ENCODE measurements at regions of chr7 and their contacts with region 1.

Region 1: GRCh38 chr7:128739048-128739962 is at the start of gene CALU:
- DNase-seq: peak; percentile 87 to 95 (median 94)
- ATAC-seq: peak; percentile 98
- H3K4me3 ChIP-seq: peak within 1 kb of the TSS; percentile 86
- H3K4me3 Mint-ChIP-seq: peak within 1 kb of the TSS; percentile 89 to 100 (median 97)
- H3K27ac ChIP-seq: peak within 1 kb of the TSS; percentile 85
- H3K27ac Mint-ChIP-seq: peak within 1 kb of the TSS; percentile 96 to 99 (median 98)
- H3K4me1 ChIP-seq: peaks cover 13% of the 10 kb centered on the region in 2 donors
- H3K4me1 Mint-ChIP-seq: peaks cover 11 to 52% (median 45%) of the 10 kb centered on the region in 7 donors
- H3K27me3 ChIP-seq: no peaks in the 10 kb centered on the region
- H3K27me3 Mint-ChIP-seq: peaks cover 0 to 5% (median 0%) of the 10 kb centered on the region in 5 donors
- total RNA-seq, gene CALU: 18.6 to 36.2 (median 22.6) TPM

Region 2: GRCh38 chr7:128409596-128410160 is 329.6 kb before region 1 on chr7 and contains the start of gene IMPDH1:
- CTCF ChIA-PET with region 1: no interaction called
- POLR2A ChIA-PET with region 1: no interaction called
- intact Hi-C with region 1: loop called in 1 of 2 experiments (anchors 1 kb)
- DNase-seq: peak; percentile 73 to 95 (median 83)
- ATAC-seq: peak; percentile 87
- H3K4me3 ChIP-seq: peak within 1 kb of the TSS; percentile 89
- H3K4me3 Mint-ChIP-seq: peak within 1 kb of the TSS; percentile 88 to 95 (median 92)
- H3K27ac ChIP-seq: peak within 1 kb of the TSS; percentile 81
- H3K27ac Mint-ChIP-seq: peak within 1 kb of the TSS; percentile 87 to 93 (median 90)
- H3K4me1 ChIP-seq: peaks cover 15 to 27% of the 10 kb centered on the region in 2 donors
- H3K4me1 Mint-ChIP-seq: peaks cover 12 to 41% (median 38%) of the 10 kb centered on the region in 7 donors
- H3K27me3 ChIP-seq: no peaks in the 10 kb centered on the region
- H3K27me3 Mint-ChIP-seq: peaks cover 0 to 26% (median 0%) of the 10 kb centered on the region in 5 donors
- total RNA-seq, gene IMPDH1: 36.5 to 92.0 (median 44.4) TPM

Region 3: GRCh38 chr7:128530855-128531104 is 208.5 kb before region 1 on chr7:
- CTCF ChIA-PET with region 1: no interaction called
- POLR2A ChIA-PET with region 1: no interaction called
- intact Hi-C with region 1: loop called in 1 of 2 experiments (anchors 2 kb)
- DNase-seq: no peak
- ATAC-seq: no peak
- H3K4me3 ChIP-seq: peak overlapping the region; percentile 46
- H3K4me3 Mint-ChIP-seq: peak overlapping the region in 1 of 10 donors; percentile 16
- H3K27ac ChIP-seq: peak overlapping the region; percentile 95
- H3K27ac Mint-ChIP-seq: no peak overlapping the region
- H3K4me1 ChIP-seq: peaks cover 0 to 4% of the 10 kb centered on the region in 2 donors
- H3K4me1 Mint-ChIP-seq: peaks cover 23 to 42% (median 40%) of the 10 kb centered on the region in 7 donors
- H3K27me3 ChIP-seq: no peaks in the 10 kb centered on the region
- H3K27me3 Mint-ChIP-seq: no peaks in the 10 kb centered on the region

Region 4: DNA sequence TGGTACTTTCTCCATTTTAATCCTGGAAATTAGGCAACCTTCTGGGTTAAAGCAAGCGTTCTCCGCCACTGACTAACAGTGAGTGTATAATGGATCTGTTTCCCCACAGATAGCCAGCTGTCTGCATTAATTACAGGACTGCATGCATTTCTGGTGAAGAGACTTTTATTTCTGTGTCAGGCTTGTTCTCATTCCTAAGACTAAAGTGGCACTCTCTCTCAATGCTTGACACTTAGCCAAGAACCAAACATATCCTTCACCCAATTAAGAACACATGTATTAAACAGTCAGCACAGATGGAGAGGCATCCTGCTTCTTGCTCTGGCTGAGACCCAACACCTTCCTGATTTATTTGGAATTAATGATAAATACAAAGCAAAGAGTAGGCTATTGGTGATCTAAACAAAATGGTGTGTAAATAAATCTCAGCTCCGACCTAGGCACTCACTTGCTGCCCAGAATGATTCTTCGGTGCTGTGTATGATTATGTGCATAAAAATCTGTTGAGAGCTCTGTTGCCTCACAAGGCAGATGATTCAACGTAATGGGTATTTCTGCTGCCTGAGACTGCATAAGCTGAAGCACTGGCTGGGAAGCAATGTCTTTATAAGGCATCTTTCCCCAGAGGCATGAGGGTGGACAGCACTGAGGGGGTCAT is 16.6 kb after region 1 on chr7:
- CTCF ChIA-PET with region 1: no interaction called
- POLR2A ChIA-PET with region 1: interaction called, 10 read pairs
- intact Hi-C with region 1: no loop called
- DNase-seq: no peak
- ATAC-seq: no peak
- H3K4me3 ChIP-seq: no peak overlapping the region
- H3K4me3 Mint-ChIP-seq: no peak overlapping the region
- H3K27ac ChIP-seq: no peak overlapping the region
- H3K27ac Mint-ChIP-seq: peak overlapping the region in 1 of 9 donors; percentile 36
- H3K4me1 ChIP-seq: no peaks in the 10 kb centered on the region
- H3K4me1 Mint-ChIP-seq: peaks cover 0 to 8% (median 5%) of the 10 kb centered on the region in 7 donors
- H3K27me3 ChIP-seq: no peaks in the 10 kb centered on the region
- H3K27me3 Mint-ChIP-seq: no peaks in the 10 kb centered on the region

Region 5: DNA sequence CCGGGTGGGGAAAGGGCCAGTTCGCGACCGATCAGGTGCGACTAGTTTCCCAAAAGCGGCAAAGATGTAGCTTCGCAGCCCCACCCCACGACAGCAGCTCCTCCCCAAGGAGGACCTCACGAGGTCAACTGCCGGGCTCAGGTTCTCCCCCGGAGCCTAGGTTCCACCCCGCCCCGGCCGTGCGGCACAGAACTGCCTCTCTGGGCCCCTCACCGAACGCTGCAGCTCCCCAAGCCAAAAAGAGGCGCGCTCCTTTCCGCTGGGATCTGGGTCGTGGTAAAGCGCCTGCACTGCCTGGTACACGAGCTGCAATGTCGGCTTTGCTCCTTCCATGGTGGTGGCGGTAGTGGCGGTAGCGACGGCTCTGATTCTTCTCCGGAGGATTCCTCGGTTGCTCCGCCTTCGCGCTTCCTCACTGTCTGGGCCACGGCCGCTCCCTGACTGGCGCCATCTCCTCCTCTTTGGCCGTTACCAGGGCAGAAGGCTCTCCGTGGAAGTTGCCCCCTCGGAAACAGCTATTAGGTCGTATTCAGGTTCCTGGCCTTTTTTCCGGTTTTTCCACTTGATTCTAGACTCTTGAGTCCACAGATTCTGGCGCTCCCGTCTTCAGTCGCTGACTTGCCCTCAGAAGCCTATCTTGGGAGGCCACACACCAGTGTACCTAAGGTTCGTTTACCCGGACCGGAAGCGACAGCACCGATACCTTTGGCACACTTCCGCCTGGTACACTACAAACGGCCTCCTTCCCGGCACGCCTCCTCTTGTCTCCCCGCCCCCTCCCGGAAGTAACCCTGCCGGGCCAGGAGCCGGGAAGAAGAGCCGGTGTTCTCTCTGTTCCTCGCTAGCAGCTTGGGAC is 315.4 kb after region 1 on chr7 and contains the start of gene TNPO3:
- CTCF ChIA-PET with region 1: no interaction called
- POLR2A ChIA-PET with region 1: no interaction called
- intact Hi-C with region 1: loop called (anchors 1 to 2 kb)
- DNase-seq: peak; percentile 76 to 90 (median 85)
- ATAC-seq: peak; percentile 92
- H3K4me3 ChIP-seq: peak within 1 kb of the TSS; percentile 96
- H3K4me3 Mint-ChIP-seq: peak within 1 kb of the TSS; percentile 91 to 99 (median 99)
- H3K27ac ChIP-seq: peak within 1 kb of the TSS; percentile 92
- H3K27ac Mint-ChIP-seq: peak within 1 kb of the TSS; percentile 96 to 100 (median 99)
- H3K4me1 ChIP-seq: peaks cover 15 to 18% of the 10 kb centered on the region in 2 donors
- H3K4me1 Mint-ChIP-seq: peaks cover 17 to 51% (median 39%) of the 10 kb centered on the region in 7 donors
- H3K27me3 ChIP-seq: peaks cover 0 to 3% of the 10 kb centered on the region in 2 donors
- H3K27me3 Mint-ChIP-seq: peaks cover 4 to 13% (median 4%) of the 10 kb centered on the region in 5 donors
- total RNA-seq, gene TNPO3: 28.6 to 40.6 (median 39.6) TPM

Region 6: GRCh38 chr7:129611246-129612111 is 872.2 kb after region 1 on chr7 and contains the start of gene NRF1:
- CTCF ChIA-PET with region 1: no interaction called
- POLR2A ChIA-PET with region 1: no interaction called
- intact Hi-C with region 1: loop called in 1 of 2 experiments (anchors 2 kb)
- DNase-seq: peak; percentile 89 to 97 (median 94)
- ATAC-seq: peak; percentile 92
- H3K4me3 ChIP-seq: peak within 1 kb of the TSS; percentile 87
- H3K4me3 Mint-ChIP-seq: peak within 1 kb of the TSS; percentile 88 to 99 (median 96)
- H3K27ac ChIP-seq: peak within 1 kb of the TSS; percentile 82
- H3K27ac Mint-ChIP-seq: peak within 1 kb of the TSS; percentile 92 to 99 (median 96)
- H3K4me1 ChIP-seq: peaks cover 24 to 38% of the 10 kb centered on the region in 2 donors
- H3K4me1 Mint-ChIP-seq: peaks cover 37 to 79% (median 67%) of the 10 kb centered on the region in 7 donors
- H3K27me3 ChIP-seq: no peaks in the 10 kb centered on the region
- H3K27me3 Mint-ChIP-seq: no peaks in the 10 kb centered on the region
- total RNA-seq, gene NRF1: 25.8 to 49.3 (median 35.3) TPM